PC-9 (cell line): ENCODE measurements at regions of chr19 and their contacts with region 1.

Region 1: GRCh38 chr19:10612491-10613119 is 12.7 kb upstream of the SLC44A2 start:
- DNase-seq: peak in 1 of 2 experiments; percentile 64
- H3K4me3 ChIP-seq: no peak overlapping the region
- H3K27ac ChIP-seq: no peak overlapping the region
- H3K4me1 ChIP-seq: peaks cover 15% of the 10 kb centered on the region
- H3K27me3 ChIP-seq: no peaks in the 10 kb centered on the region
- CTCF ChIP-seq: no peak

Region 2: DNA sequence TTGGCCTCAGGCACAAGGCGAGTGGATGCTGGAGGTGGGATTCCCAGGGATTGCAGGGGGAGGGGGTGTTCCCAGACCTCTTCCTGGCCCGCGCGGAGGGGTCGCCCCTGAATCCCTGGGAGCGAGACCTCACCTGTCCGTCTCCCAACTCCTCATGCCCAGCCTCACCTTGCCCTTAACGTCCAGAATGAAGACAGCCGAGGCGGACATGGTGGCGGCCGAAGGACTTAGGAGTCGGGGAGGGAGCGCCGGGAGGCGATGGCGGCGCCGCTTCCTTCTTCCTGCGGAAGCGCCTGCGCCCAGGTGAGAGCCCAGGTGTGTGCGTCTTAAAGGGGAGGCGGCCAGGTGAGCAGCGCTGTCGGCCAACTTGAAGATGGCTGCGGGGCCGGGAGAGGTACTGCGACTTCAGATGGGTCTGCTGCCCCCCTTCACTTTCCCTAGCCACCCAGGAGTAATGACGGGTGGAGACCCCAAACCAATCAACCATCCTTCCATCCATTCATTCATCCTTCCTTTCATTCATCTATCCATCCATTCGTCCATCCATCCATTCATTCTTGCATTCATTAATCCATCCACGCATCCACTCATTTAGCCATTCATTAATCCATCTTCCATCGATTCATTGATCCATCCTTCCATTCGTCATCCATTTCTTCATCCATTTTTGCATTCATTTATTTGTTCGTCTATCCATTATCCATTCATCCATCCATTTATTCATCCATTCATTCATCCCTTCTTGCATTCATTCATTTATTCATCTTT is 25.4 kb before region 1 on chr19 and contains the start of gene AP1M2:
- CTCF ChIA-PET with region 1: no interaction called
- POLR2A ChIA-PET with region 1: no interaction called
- intact Hi-C with region 1: no loop called
- DNase-seq: peak; percentile 60 to 77
- H3K4me3 ChIP-seq: peak within 1 kb of the TSS; percentile 86
- H3K27ac ChIP-seq: peak within 1 kb of the TSS; percentile 58
- H3K4me1 ChIP-seq: peaks cover 8% of the 10 kb centered on the region; the same call in 1 of the 2 replicates
- H3K27me3 ChIP-seq: no peaks in the 10 kb centered on the region
- CTCF ChIP-seq: no peak
- total RNA-seq, gene AP1M2: 94.5 and 126 TPM in 2 replicates

Region 3: DNA sequence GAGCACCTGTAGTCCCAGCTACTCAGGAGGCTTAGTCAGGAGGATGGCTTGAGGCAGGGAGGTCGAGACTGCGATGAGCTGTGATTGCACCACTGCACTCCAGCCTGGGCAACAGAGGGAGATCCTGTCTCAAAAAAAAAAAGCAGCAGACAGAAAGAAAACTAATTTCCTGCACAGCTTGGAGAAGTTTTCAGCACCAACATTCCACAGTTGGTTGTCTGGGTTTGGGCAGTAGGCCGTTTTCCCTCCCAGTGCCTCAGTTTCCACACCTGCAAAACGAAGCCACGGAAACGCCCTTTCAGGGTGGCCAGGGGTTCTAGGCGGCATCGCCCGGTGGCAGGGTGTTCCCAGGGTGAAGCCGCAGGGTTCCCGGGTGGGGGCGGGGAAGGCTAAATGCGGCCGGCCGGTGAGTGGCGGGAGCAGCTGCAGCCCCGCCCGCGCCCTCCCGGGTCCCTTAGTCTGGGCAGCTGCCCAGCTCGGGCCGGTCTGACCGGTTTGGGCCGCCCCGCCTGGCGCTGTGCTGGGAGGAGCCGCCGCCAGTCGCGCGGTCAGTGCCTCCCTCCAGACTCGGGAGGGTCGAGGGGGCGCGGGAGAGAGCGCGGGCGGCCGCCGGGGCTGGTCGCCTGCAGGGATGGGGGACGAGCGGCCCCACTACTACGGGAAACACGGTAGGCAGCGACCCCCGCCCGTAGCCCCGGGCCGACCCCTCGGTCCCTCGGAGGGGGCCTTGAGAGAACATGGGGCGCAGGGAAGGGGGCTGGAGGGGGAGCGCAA is 12.6 kb after region 1 on chr19 and contains the start of gene SLC44A2:
- CTCF ChIA-PET with region 1: no interaction called
- POLR2A ChIA-PET with region 1: interaction called, 4 read pairs
- intact Hi-C with region 1: loop called (anchors 1 kb)
- DNase-seq: peak; percentile 76 to 95
- H3K4me3 ChIP-seq: peak within 1 kb of the TSS; percentile 83
- H3K27ac ChIP-seq: peak within 1 kb of the TSS; percentile 56
- H3K4me1 ChIP-seq: peaks cover 67% of the 10 kb centered on the region
- H3K27me3 ChIP-seq: no peaks in the 10 kb centered on the region
- CTCF ChIP-seq: no peak
- total RNA-seq, gene SLC44A2: 205 and 239 TPM in 2 replicates